ENCODE measurements at regions of chr19 and their contacts with region 1.

Region 1: DNA sequence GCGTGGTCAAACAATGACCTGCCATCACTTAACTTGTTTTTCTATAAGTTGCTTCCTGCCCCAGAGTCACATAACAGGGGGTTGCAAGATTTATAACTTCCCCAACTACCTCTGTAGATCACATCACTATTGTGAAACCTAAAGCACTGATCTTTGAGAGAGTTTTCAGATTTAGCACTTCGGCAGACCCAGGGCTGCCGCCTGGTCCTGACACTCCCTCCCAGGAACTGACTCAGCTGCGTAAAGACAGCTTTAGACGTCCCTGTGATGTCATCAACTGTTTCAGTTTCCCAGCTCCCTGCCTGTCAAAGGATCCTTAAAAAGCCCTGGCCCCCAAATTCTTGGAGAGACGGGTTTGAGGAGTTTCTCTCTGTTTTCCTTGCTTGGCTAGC is 33.3 kb downstream of the IGFL2 start:
- DNase-seq: peak in 1 of 2 donors; percentile 75
- H3K4me3 ChIP-seq: no peak overlapping the region
- CTCF ChIP-seq: no peak
- POLR2A ChIP-seq: no peak

Region 2: DNA sequence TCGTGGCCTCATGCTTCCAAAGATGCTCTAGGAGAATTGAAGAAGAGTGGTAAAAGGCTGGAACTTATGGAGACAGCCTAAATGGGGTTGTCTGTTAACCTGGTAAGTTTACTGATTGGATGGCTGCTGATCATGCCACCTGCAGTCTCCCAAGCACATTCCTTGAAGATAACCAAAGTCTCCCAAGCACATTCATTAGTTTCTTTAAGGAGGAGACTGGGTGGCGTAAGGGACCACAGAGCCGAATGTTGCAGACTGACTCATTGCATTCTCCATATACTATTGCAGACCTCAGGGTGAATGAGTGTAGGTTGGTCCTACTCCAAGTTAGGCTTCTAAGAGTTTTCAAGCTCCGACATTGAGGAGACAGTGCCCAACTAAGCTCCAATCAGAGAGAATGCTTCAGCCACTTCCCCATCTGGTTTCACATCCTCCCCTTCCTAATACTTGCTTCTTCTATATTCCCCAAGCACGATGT is 56.7 kb before region 1 on chr19 and contains the start of gene IGFL3:
- intact Hi-C with region 1: loop called (anchors 5 kb)
- DNase-seq: no peak
- H3K4me3 ChIP-seq: no peak within 1 kb of the TSS
- CTCF ChIP-seq: no peak
- POLR2A ChIP-seq: no peak
- total RNA-seq, gene IGFL3: 19.0 to 46.7 (median 24.9) TPM